OCI-LY7 (cell line): ENCODE measurements at regions of chr20 and their contacts with region 1.

Region 1: GRCh38 chr20:62010551-62011402 is 54.9 kb downstream of the TAF4 start:
- DNase-seq: peak; percentile 71
- H3K4me3 ChIP-seq: no peak overlapping the region
- H3K27ac ChIP-seq: peak overlapping the region; percentile 26
- H3K4me1 ChIP-seq: peaks cover 13% of the 10 kb centered on the region
- CTCF ChIP-seq: peak; percentile 96

Region 2: DNA sequence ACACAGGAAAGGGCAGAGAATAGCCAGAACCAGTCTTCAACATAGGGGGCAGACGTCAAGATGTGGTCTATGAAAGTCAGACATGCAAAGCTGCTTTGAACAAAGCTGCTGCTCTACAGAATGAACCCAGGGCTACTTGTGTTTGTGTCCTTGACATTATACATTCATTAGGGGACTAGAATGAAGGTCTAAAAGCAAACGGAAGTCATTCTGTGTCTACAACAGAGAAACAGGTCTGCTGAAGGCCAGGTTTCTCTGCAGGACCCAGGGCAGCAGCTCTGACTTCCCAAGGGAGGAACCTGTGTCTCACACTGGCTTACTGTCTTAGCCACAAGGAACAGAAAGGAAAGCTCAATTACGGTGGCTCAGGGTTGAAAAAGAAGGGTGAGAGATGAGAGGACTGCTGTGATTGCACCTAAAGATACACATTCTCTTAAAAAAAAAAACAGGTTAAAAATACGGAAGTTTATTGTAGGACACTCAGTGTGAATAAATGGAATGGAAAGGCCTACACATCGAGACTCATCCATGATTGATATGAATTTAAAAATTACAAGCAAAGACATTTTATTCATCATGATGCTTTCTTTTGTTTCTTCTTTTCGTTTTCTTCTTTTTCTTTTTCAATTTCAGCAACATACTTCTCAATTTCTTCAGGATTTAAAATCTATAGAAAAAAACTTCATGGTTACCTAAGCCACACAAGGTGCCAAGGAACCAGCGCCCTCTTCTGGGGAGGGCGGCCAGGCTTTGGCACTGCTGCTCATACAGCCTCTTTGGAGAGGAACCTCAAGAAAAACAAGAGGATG is 125.7 kb after region 1 on chr20:
- CTCF ChIA-PET with region 1: no interaction called
- POLR2A ChIA-PET with region 1: interaction called, 3 read pairs
- intact Hi-C with region 1: loop called (anchors 1 kb)
- DNase-seq: peak; percentile 82
- H3K4me3 ChIP-seq: no peak overlapping the region
- H3K27ac ChIP-seq: peak overlapping the region; percentile 37
- H3K4me1 ChIP-seq: peaks cover 10% of the 10 kb centered on the region
- CTCF ChIP-seq: peak; percentile 99

Region 3: GRCh38 chr20:62156592-62157386 is 146.0 kb after region 1 on chr20:
- CTCF ChIA-PET with region 1: no interaction called
- POLR2A ChIA-PET with region 1: no interaction called
- intact Hi-C with region 1: loop called (anchors 5 kb)
- DNase-seq: peak; percentile 69
- H3K4me3 ChIP-seq: no peak overlapping the region
- H3K27ac ChIP-seq: no peak overlapping the region
- H3K4me1 ChIP-seq: no peaks in the 10 kb centered on the region
- CTCF ChIP-seq: peak; percentile 81

Region 4: GRCh38 chr20:62219992-62220665 is 209.4 kb after region 1 on chr20 and contains the start of gene HRH3:
- CTCF ChIA-PET with region 1: no interaction called
- POLR2A ChIA-PET with region 1: no interaction called
- intact Hi-C with region 1: no loop called
- DNase-seq: peak; percentile 56
- H3K4me3 ChIP-seq: no peak within 1 kb of the TSS
- H3K27ac ChIP-seq: no peak within 1 kb of the TSS
- H3K4me1 ChIP-seq: peaks cover 23% of the 10 kb centered on the region
- CTCF ChIP-seq: no peak
- total RNA-seq, gene HRH3: not detected in 2 replicates